ENCODE measurements at regions of chr1 and their contacts with region 1.

Region 1: DNA sequence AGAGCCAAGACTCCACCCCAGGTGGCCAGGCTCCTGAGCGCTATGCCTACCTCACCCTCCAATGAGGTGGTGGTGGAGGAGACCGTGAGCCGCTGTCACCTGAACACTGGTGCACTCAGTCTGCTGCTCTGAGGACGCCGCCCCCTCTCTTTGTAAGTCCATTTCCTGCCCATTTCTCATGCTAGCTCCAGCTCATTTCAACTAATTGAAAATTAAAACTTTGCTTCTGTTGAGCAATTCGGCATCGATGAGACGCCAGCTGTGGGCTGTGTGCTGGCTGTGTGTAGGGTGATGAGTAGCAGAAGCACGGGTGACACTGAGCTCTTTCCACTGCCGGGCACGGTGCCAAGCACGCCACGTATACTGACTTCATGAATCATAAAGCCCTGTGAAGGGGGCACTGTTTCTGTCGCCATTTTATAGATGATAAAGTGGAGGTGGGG is 11.2 kb downstream of the TNFRSF1B start:
- DNase-seq: peak; percentile 96
- H3K4me3 Mint-ChIP-seq: peak overlapping the region; percentile 69
- H3K27ac Mint-ChIP-seq: peak overlapping the region; percentile 90
- H3K4me1 Mint-ChIP-seq: peaks cover 88% of the 10 kb centered on the region
- H3K27me3 Mint-ChIP-seq: no peaks in the 10 kb centered on the region

Region 2: GRCh38 chr1:12047120-12047876 is 130.7 kb before region 1 on chr1:
- CTCF ChIA-PET with region 1: no interaction called
- intact Hi-C with region 1: loop called (anchors 2 kb)
- DNase-seq: peak; percentile 87
- H3K4me3 Mint-ChIP-seq: no peak overlapping the region
- H3K27ac Mint-ChIP-seq: no peak overlapping the region
- H3K4me1 Mint-ChIP-seq: peaks cover 8% of the 10 kb centered on the region
- H3K27me3 Mint-ChIP-seq: peaks cover 8% of the 10 kb centered on the region

Region 3: DNA sequence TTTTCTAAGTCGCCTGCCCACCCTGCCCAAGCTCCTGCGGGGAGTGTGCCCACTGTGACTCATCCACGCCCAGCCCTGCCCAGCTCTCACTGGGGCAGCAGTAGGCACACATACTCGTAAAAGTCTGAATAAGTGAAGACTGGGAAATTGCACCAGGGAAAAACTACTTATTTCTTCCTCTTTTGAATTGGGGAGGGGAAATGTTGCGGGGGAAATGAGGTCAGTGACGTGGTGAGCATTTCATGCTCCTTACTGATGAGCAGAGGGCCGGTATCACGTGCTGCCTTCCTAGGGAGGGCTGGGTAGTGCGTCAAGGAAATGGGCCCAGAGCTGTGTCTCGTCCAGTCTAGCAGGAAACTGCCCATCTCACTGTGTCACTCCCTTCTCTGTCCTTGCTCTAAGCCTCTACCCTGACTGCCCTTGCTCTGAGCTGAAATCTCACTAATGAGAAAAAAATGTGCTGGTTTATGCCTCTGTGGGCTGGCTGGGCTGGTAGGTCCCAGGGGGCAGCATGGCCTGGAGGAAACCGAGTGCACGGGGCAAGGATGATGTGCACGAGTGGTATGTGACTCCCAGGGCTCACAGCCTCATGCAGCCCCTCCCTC is 24.7 kb before region 1 on chr1:
- CTCF ChIA-PET with region 1: interaction called, 10 read pairs
- intact Hi-C with region 1: loop called (anchors 1 kb)
- DNase-seq: peak; percentile 67
- H3K4me3 Mint-ChIP-seq: no peak overlapping the region
- H3K27ac Mint-ChIP-seq: peak overlapping the region; percentile 89
- H3K4me1 Mint-ChIP-seq: peaks cover 83% of the 10 kb centered on the region
- H3K27me3 Mint-ChIP-seq: no peaks in the 10 kb centered on the region

Region 4: DNA sequence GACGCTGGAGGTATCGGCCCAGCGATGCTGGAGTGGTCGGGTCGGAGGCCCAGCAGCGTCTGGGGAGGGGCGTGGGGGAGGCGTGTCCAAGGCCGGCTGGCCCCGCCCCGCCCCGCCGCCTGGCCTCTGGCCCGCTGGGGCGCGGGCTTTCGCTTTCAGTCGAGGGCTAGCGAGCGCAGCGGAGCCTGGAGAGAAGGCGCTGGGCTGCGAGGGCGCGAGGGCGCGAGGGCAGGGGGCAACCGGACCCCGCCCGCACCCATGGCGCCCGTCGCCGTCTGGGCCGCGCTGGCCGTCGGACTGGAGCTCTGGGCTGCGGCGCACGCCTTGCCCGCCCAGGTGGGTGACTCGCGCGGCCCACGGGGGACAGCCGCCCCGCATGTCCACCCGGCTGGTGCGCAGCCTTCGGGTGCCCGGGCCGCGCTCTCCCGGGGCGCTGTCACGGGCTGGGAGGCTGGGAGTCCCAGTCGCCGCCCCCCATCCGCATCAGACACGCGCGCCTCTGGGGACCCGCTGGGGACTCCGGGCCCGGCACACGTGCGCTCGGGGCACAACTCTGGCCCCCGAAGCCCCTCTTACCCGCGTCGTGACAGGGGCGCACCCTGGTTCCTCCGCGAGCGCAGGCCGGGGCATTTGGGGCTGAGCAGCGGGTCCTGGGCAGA is 11.1 kb before region 1 on chr1 and contains the start of gene TNFRSF1B:
- CTCF ChIA-PET with region 1: interaction called, 8 read pairs
- intact Hi-C with region 1: loop called (anchors 1 kb)
- DNase-seq: peak; percentile 66
- H3K4me3 Mint-ChIP-seq: peak within 1 kb of the TSS; percentile 99
- H3K27ac Mint-ChIP-seq: peak within 1 kb of the TSS; percentile 97
- H3K4me1 Mint-ChIP-seq: peaks cover 66% of the 10 kb centered on the region
- H3K27me3 Mint-ChIP-seq: no peaks in the 10 kb centered on the region
- total RNA-seq, gene TNFRSF1B: 69.4 to 75.7 TPM

Region 5: DNA sequence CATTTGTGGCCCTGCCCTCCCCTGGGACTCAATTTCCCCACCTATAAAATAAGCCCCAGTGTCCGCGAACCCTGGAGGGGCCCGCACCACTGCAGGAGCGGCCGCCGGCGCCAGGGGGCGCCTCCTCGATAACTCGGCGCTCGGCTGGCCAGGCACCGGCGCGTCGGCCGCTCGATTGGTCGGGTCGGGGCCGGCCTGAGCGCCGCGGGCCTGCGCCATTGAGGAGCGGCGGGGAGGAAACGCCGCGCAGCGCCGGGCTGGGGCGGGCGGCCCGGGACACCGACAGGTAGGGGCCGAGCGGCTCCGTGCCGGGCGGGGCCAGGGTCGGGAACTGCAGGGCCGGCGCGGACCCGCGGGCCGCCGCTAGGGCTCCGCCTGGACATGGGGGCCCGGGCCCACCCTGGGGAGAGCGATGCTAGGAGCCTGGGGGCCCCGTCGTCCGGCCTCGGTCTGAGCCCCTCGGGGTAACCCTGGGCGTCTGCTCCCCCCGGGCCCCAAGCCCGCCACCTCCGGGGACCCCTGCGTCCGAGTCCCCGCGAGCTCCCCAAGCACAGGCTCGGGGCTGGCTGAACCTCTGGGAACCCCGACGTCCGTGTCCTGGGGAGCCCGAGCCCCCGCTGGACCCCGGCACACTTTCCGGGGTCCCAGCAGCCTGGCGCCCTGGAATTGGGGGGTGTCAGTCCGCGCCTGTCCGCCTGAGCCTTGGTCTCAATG is 52.0 kb after region 1 on chr1 and contains the start of gene VPS13D:
- CTCF ChIA-PET with region 1: no interaction called
- intact Hi-C with region 1: no loop called
- DNase-seq: peak; percentile 86
- H3K4me3 Mint-ChIP-seq: peak within 1 kb of the TSS; percentile 80
- H3K27ac Mint-ChIP-seq: no peak within 1 kb of the TSS
- H3K4me1 Mint-ChIP-seq: peaks cover 21% of the 10 kb centered on the region
- H3K27me3 Mint-ChIP-seq: no peaks in the 10 kb centered on the region
- total RNA-seq, gene VPS13D: 20.0 to 23.3 TPM

Region 6: GRCh38 chr1:12472798-12473551 is 295.0 kb after region 1 on chr1:
- CTCF ChIA-PET with region 1: no interaction called
- intact Hi-C with region 1: loop called (anchors 5 kb)
- DNase-seq: peak; percentile 95
- H3K4me3 Mint-ChIP-seq: peak overlapping the region; percentile 56
- H3K27ac Mint-ChIP-seq: peak overlapping the region; percentile 98
- H3K4me1 Mint-ChIP-seq: peaks cover 89% of the 10 kb centered on the region
- H3K27me3 Mint-ChIP-seq: no peaks in the 10 kb centered on the region

Region 7: DNA sequence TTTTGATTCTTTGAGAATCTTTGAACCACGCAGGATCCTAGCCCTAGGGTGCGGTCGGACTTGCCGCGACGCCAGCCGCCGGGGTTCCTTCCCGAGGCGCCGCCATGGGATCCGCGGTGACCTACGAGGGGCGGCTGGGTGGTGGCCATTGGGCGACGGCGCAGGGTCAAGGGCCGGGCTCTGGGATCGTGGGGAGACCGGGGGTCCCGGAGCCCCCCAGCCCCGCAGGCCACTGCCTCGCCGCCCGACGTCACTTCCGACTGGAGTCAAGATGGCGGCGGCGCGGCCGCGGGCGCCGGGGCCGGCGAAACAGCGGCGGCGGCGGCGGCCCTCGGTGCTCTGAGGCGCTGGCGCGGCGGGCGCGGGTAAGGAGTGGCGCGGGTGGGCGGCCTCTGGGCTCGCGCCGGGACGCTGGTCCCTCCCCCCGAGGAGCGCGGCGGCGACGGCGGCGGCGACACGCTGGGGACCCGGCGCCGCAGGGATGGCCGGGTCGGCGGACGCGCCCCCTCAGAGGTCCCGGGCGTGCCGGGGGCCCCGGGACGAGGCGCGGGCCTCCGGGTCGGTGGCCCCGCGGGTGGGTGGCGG is 1522.0 kb after region 1 on chr1 and contains the start of gene PRDM2:
- CTCF ChIA-PET with region 1: no interaction called
- intact Hi-C with region 1: loop called (anchors 10 kb)
- DNase-seq: peak; percentile 49
- H3K4me3 Mint-ChIP-seq: peak within 1 kb of the TSS; percentile 88
- H3K27ac Mint-ChIP-seq: peak within 1 kb of the TSS; percentile 94
- H3K4me1 Mint-ChIP-seq: peaks cover 42% of the 10 kb centered on the region
- H3K27me3 Mint-ChIP-seq: no peaks in the 10 kb centered on the region
- total RNA-seq, gene PRDM2: 33.8 to 37.3 TPM